Endothelial cell of umbilical vein (primary cell): ENCODE measurements at regions of chr5 and their contacts with region 1.

Region 1: DNA sequence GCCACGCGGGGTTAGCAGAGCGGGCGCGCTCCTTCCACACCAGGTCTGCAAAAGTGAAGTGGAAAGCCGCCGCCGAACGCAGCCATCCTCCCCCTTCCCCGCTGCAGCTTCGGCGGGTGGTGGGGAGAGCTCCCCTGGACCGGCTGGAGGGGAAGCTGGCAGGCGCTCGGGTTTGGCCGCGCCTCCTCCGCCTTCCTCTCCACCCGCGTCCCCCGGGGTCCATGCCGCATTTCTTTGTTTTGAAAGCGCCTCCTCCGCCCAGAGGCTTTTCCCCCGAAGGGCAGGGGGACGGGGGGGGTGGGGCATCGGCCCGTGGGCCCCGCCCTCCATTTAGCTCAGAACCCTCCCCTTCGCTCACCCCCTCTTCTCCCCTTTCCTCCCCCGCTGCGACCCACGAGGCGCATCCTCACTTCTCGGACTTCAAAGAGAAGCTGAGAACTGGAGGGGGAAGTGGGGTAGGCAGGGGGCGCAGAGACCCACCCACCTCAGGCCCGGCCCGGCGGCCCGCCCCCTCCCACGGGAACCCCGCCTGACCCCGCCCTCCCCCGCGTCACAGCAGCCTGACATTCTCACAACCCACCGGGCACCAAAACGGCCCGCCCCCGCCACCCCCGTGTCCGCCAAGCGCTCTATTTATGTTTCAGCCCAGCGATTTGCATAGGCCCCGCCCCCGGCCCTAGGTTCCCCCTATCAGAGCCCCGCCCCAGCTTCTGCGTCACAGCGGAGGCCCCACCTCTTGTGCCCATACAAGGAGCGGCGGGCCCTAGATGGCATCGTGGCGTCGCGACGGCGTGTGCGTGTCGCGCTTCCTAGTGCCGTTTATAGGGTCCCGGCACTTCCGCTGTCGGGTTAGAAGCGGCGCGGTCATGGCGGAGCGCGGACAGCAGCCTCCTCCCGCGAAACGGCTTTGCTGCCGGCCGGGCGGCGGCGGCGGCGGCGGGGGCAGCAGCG is at the start of gene ZSWIM6:
- DNase-seq: peak; percentile 99
- H3K4me3 ChIP-seq: peak within 1 kb of the TSS; percentile 76 to 99 (median 83)
- H3K27ac ChIP-seq: peak within 1 kb of the TSS; percentile 89
- H3K4me1 ChIP-seq: peaks cover 46% of the 10 kb centered on the region
- H3K27me3 ChIP-seq: no peaks in the 10 kb centered on the region
- CTCF ChIP-seq: no peak
- POLR2A ChIP-seq: peak; percentile 97
- total RNA-seq, gene ZSWIM6: 25.3 and 25.7 TPM in 2 replicates

Region 2: DNA sequence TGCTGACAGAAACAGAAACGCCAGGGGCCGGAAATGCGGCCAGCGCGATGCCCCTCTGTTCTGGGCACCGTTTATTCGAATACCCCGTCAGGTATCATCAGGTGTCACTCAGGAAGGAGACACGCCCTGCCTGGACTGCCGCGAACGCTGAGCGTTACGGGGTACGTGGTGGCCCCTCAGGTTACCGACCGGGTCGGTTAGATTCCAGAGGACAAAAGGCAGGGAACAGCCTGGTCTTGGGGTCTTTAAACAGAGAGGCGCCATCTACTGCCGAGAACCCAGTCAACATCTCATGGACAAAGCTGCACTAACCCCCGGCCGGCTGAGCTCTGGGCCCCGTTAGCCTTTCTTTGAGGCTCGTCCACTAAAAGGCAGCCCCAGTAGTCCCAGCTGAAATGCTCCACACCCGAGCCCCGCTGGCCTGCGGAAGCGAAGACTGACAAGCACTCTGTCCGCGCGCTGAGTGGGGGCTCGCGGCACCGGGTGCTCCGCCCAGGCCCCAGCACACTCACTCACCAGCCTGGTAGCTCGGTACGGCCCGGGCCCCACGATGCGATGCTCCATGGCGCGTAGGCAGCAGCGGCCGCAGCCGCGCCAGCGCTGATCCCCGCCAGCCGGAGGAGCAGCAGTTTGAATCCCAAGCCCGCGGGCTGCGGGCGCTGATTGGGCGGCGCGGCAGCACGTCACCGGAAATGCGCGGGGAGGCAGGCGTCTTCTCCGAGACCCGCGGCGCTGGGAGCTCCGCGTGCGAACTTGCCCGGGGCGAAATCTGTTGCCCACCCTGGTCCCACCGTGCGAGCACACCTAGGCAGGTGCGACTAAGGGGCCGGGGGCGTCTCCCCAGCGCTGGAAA is 631.9 kb before region 1 on chr5 and contains the start of gene DEPDC1B:
- CTCF ChIA-PET with region 1: no interaction called
- POLR2A ChIA-PET with region 1: interaction called, 3 read pairs
- dilution Hi-C with region 1: no loop called
- intact Hi-C with region 1: loop called (anchors 10 kb)
- DNase-seq: peak; percentile 92
- H3K4me3 ChIP-seq: peak within 1 kb of the TSS; percentile 53 to 87 (median 70)
- H3K27ac ChIP-seq: peak within 1 kb of the TSS; percentile 54
- H3K4me1 ChIP-seq: peaks cover 15% of the 10 kb centered on the region
- H3K27me3 ChIP-seq: peaks cover 3 to 5% of the 10 kb centered on the region in 2 experiments
- CTCF ChIP-seq: peak; percentile 42 to 60
- POLR2A ChIP-seq: peak; percentile 64
- total RNA-seq, gene DEPDC1B: 14.2 and 18.7 TPM in 2 replicates

Region 3: DNA sequence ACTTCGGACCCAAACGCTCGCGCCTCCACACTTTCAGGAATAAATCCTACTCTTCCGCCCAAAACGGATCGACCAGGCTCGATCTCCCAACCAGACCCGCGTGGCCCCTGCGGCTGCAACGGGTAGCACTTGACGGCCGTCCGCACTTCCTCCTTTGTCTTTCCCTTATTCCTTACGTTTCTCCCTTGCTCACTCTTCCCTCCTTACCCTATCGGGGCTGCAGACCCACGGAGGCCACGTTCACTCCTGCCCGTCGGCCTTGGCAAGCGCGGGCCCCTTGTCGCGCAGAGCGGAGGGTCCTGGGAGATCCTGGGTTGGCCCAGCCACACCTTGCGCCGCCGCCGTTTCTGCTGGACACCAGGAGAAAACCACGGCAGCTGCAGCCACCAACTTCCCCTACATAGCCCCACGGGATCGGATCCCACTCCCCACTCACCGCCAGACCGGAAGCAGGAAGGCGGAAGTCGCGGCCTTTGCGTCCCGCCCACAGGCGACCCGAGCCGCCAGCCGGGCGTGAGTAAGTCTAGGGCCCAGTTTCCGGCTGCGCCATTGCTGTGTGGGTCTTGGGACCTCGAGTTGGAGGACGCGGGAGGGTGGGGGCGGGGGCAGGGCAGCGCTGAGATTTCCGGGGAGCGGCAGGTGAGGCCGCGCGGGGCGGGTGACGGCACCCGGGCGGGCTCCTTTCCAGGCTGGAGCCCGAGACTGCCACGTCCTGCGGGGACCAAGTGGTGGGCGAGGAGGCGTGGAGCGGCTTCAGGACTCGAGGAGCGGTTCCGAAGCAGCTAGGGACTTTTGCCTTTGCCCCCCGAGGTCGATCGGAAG is 169.5 kb before region 1 on chr5 and contains the start of gene SMIM15:
- CTCF ChIA-PET with region 1: interaction called, 8 read pairs
- POLR2A ChIA-PET with region 1: interaction called, 8 read pairs
- dilution Hi-C with region 1: no loop called
- intact Hi-C with region 1: loop called (anchors 1 kb)
- DNase-seq: peak; percentile 82
- H3K4me3 ChIP-seq: peak within 1 kb of the TSS; percentile 22 to 70 (median 67)
- H3K27ac ChIP-seq: peak within 1 kb of the TSS; percentile 72
- H3K4me1 ChIP-seq: peaks cover 15% of the 10 kb centered on the region
- H3K27me3 ChIP-seq: no peaks in the 10 kb centered on the region
- CTCF ChIP-seq: no peak
- POLR2A ChIP-seq: peak; percentile 61
- total RNA-seq, gene SMIM15: 48.8 and 54.5 TPM in 2 replicates

Region 4: DNA sequence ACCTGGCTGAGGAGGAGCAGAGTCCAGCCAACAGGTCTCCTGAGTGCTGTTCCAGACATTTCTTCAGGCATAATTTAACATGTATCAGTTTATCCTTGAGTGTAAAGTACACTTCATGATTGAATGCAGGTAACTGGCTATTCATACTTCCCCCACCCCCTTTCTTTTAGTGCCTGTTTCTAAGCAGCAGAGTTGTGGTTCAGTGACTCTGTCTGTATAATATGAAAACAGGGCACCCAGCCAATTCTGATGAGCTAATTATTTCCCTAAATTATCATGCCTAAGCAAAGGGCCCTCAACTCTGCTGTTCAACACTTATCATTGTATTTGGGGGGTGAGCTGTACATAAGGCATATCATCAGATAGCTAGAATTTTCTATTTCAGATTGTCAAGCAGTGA is 51.5 kb before region 1 on chr5:
- CTCF ChIA-PET with region 1: interaction called, 58 read pairs
- POLR2A ChIA-PET with region 1: interaction called, 5 read pairs
- dilution Hi-C with region 1: no loop called
- intact Hi-C with region 1: loop called (anchors 1 kb)
- DNase-seq: peak; percentile 89
- H3K4me3 ChIP-seq: no peak overlapping the region
- H3K27ac ChIP-seq: no peak overlapping the region
- H3K4me1 ChIP-seq: peaks cover 39% of the 10 kb centered on the region
- H3K27me3 ChIP-seq: no peaks in the 10 kb centered on the region
- CTCF ChIP-seq: no peak
- POLR2A ChIP-seq: no peak

Region 5: GRCh38 chr5:61408476-61409168 is 76.9 kb after region 1 on chr5:
- CTCF ChIA-PET with region 1: interaction called, 10 read pairs
- POLR2A ChIA-PET with region 1: interaction called, 13 read pairs
- dilution Hi-C with region 1: no loop called
- intact Hi-C with region 1: loop called (anchors 1 kb)
- DNase-seq: peak; percentile 99
- H3K4me3 ChIP-seq: peak overlapping the region in 2 of 3 experiments; percentile 15 to 63
- H3K27ac ChIP-seq: peak overlapping the region; percentile 97
- H3K4me1 ChIP-seq: peaks cover 21% of the 10 kb centered on the region
- H3K27me3 ChIP-seq: no peaks in the 10 kb centered on the region
- CTCF ChIP-seq: no peak
- POLR2A ChIP-seq: peak; percentile 52

Region 6: GRCh38 chr5:61658592-61659008 is 326.9 kb after region 1 on chr5:
- CTCF ChIA-PET with region 1: interaction called, 22 read pairs
- POLR2A ChIA-PET with region 1: no interaction called
- dilution Hi-C with region 1: no loop called
- intact Hi-C with region 1: loop called (anchors 1 kb)
- DNase-seq: peak; percentile 74
- H3K4me3 ChIP-seq: no peak overlapping the region
- H3K27ac ChIP-seq: no peak overlapping the region
- H3K4me1 ChIP-seq: no peaks in the 10 kb centered on the region
- H3K27me3 ChIP-seq: peaks cover 5 to 11% of the 10 kb centered on the region in 2 experiments
- CTCF ChIP-seq: peak; percentile 90 to 93
- POLR2A ChIP-seq: no peak